Ascending aorta (tissue), 2 donors: ENCODE measurements at regions of chr1 and their contacts with region 1.

Region 1: GRCh38 chr1:89358287-89358893 is 5.5 kb upstream of the GBP6 start:
- DNase-seq: peak in 1 of 2 donors; percentile 91
- H3K4me3 ChIP-seq: no peak overlapping the region
- H3K27ac ChIP-seq: no peak overlapping the region
- H3K4me1 ChIP-seq: no peaks in the 10 kb centered on the region
- H3K27me3 ChIP-seq: no peaks in the 10 kb centered on the region
- CTCF ChIP-seq: peak; percentile 67 to 80 (median 72)

Region 2: GRCh38 chr1:88998716-88999115 is 359.7 kb before region 1 on chr1:
- intact Hi-C with region 1: loop called (anchors 1 kb)
- DNase-seq: no peak
- H3K4me3 ChIP-seq: no peak overlapping the region
- H3K27ac ChIP-seq: no peak overlapping the region
- H3K4me1 ChIP-seq: peaks cover 0 to 2% of the 10 kb centered on the region in 2 donors
- H3K27me3 ChIP-seq: no peaks in the 10 kb centered on the region
- CTCF ChIP-seq: peak; percentile 44 to 58 (median 54)

Region 3: DNA sequence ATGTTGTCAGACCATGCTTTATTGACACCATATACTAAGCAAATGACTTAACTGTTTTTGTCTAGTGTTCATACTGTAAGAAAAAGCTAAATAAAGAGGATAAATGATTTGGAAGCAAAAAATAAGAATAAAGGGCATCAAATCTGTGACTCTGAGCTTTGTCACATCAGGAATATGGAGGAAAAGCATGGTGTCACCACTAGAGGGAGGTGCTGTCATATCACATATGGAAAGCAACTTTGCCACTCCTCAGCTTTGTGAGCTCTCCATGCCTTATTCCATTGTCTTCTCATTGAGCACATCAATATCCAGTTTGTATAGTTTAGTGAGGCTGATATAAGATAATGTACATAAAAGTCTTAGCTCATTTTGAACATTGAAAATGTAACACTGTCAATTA is 272.6 kb before region 1 on chr1:
- intact Hi-C with region 1: loop called (anchors 2 kb)
- DNase-seq: no peak
- H3K4me3 ChIP-seq: no peak overlapping the region
- H3K27ac ChIP-seq: no peak overlapping the region
- H3K4me1 ChIP-seq: no peaks in the 10 kb centered on the region
- H3K27me3 ChIP-seq: no peaks in the 10 kb centered on the region
- CTCF ChIP-seq: peak; percentile 6 to 70 (median 23)

Region 4: GRCh38 chr1:89121641-89122040 is 236.7 kb before region 1 on chr1:
- intact Hi-C with region 1: loop called (anchors 5 kb)
- DNase-seq: no peak
- H3K4me3 ChIP-seq: no peak overlapping the region
- H3K27ac ChIP-seq: no peak overlapping the region
- H3K4me1 ChIP-seq: peaks cover 3 to 9% of the 10 kb centered on the region in 2 donors
- H3K27me3 ChIP-seq: no peaks in the 10 kb centered on the region
- CTCF ChIP-seq: no peak

Region 5: DNA sequence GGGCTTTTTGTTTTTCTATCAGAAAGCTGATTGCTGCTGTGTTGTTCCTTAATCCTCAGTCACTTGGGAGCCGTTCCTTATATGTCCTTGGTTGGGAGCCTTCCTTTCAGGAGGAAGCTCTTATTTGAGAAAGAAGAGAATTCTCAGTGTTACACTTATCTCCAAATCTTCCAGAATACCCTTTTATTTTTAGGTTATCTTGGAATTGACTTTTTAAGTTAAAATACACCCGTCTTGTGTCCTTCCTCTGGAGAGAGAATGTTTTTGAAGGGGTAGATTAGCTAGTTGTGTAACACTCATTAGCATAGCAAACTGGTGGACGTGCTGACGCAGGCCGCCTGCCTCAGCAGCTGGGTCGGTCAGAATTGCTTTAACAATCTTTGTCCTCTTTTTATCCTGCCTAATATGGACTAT is 208.4 kb after region 1 on chr1:
- intact Hi-C with region 1: no loop called
- DNase-seq: peak in 1 of 2 donors; percentile 65
- H3K4me3 ChIP-seq: no peak overlapping the region
- H3K27ac ChIP-seq: no peak overlapping the region
- H3K4me1 ChIP-seq: no peaks in the 10 kb centered on the region
- H3K27me3 ChIP-seq: no peaks in the 10 kb centered on the region
- CTCF ChIP-seq: no peak